T-cell (primary cell): ENCODE measurements at regions of chr5 and their contacts with region 1.

Region 1: DNA sequence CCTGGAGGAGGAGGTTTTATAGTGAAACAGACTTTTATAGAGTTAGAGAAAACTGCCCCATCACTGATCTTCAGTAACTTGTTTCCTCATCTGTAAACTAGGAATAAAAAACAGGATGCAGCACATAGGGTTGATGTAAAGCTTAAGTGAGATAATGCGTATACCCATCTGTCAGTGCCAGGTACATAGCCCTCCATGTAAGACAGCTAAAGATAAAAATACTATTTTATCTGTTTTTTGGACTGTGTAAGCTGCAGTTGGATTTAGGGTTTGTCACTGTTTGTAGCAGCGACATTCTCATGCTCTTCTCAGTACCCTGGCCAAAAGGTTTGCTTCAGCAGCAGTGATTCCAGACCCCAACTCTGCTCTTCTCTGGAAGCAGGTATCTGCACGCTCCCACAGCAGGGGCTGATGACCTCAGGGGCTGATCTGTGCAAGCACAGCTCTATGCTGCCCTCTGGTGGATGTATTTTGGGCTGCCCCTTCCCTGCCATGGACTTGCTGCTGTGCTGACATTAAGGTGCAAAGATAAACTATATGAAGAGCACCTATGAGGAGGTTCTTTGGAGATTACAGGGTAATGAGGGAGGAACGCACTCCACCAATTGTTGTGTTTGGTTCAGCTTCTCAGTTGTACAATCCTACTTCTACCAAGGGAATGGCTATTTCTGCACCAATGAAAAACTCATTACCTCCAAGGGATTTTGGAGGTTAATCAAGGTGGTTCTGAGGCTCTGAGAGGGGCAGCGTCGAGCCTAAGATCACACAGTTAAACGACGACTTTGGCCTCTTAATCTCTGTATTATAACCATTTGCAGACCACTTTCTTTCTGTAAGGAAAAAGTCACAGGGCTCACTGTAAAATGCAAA is 13.1 kb downstream of the HMHB1 start:
- DNase-seq: peak; percentile 55 to 92 (median 76)
- ATAC-seq: peak; percentile 80 to 93 (median 86)
- H3K4me3 ChIP-seq: no peak overlapping the region
- H3K4me3 Mint-ChIP-seq: no peak overlapping the region
- H3K27ac ChIP-seq: no peak overlapping the region
- H3K27ac Mint-ChIP-seq: no peak overlapping the region
- H3K4me1 ChIP-seq: peaks cover 0 to 10% of the 10 kb centered on the region in 2 experiments
- H3K4me1 Mint-ChIP-seq: peaks cover 21 to 22% (median 21%) of the 10 kb centered on the region in 3 donors
- H3K27me3 ChIP-seq: no peaks in the 10 kb centered on the region
- H3K27me3 Mint-ChIP-seq: peaks cover 0 to 1% of the 10 kb centered on the region in 2 donors

Region 2: GRCh38 chr5:142922223-142922952 is 902.7 kb before region 1 on chr5:
- CTCF ChIA-PET with region 1: interaction called in 1 of 2 experiments, 14 read pairs
- POLR2A ChIA-PET with region 1: no interaction called
- DNase-seq: peak in 1 of 35 experiments; percentile 55
- ATAC-seq: peak in 1 of 4 experiments; percentile 41
- H3K4me3 ChIP-seq: no peak overlapping the region
- H3K4me3 Mint-ChIP-seq: no peak overlapping the region
- H3K27ac ChIP-seq: no peak overlapping the region
- H3K27ac Mint-ChIP-seq: no peak overlapping the region
- H3K4me1 ChIP-seq: peaks cover 2 to 11% of the 10 kb centered on the region in 2 experiments
- H3K4me1 Mint-ChIP-seq: peaks cover 17 to 48% (median 33%) of the 10 kb centered on the region in 3 donors
- H3K27me3 ChIP-seq: no peaks in the 10 kb centered on the region
- H3K27me3 Mint-ChIP-seq: no peaks in the 10 kb centered on the region

Region 3: GRCh38 chr5:143002459-143003328 is 822.4 kb before region 1 on chr5:
- CTCF ChIA-PET with region 1: interaction called, 7 to 13 read pairs
- POLR2A ChIA-PET with region 1: no interaction called
- DNase-seq: peak in 34 of 35 experiments; percentile 19 to 89 (median 58)
- ATAC-seq: peak; percentile 88 to 92 (median 90)
- H3K4me3 ChIP-seq: no peak overlapping the region
- H3K4me3 Mint-ChIP-seq: peak overlapping the region; percentile 49 to 63 (median 49)
- H3K27ac ChIP-seq: peak overlapping the region; percentile 97
- H3K27ac Mint-ChIP-seq: peak overlapping the region; percentile 96 to 97
- H3K4me1 ChIP-seq: peaks cover 34 to 63% of the 10 kb centered on the region in 2 experiments
- H3K4me1 Mint-ChIP-seq: peaks cover 44 to 89% (median 81%) of the 10 kb centered on the region in 3 donors
- H3K27me3 ChIP-seq: no peaks in the 10 kb centered on the region
- H3K27me3 Mint-ChIP-seq: no peaks in the 10 kb centered on the region

Region 4: GRCh38 chr5:143302341-143302740 is 522.7 kb before region 1 on chr5:
- CTCF ChIA-PET with region 1: interaction called in 1 of 2 experiments, 10 read pairs
- POLR2A ChIA-PET with region 1: no interaction called
- DNase-seq: no peak
- ATAC-seq: no peak
- H3K4me3 ChIP-seq: no peak overlapping the region
- H3K4me3 Mint-ChIP-seq: no peak overlapping the region
- H3K27ac ChIP-seq: no peak overlapping the region
- H3K27ac Mint-ChIP-seq: peak overlapping the region in 1 of 2 donors; percentile 41
- H3K4me1 ChIP-seq: no peaks in the 10 kb centered on the region
- H3K4me1 Mint-ChIP-seq: peaks cover 28 to 34% (median 28%) of the 10 kb centered on the region in 3 donors
- H3K27me3 ChIP-seq: no peaks in the 10 kb centered on the region
- H3K27me3 Mint-ChIP-seq: no peaks in the 10 kb centered on the region

Region 5: GRCh38 chr5:145797336-145797735 is 1972.2 kb after region 1 on chr5:
- CTCF ChIA-PET with region 1: no interaction called
- POLR2A ChIA-PET with region 1: no interaction called
- DNase-seq: no peak
- ATAC-seq: no peak
- H3K4me3 ChIP-seq: no peak overlapping the region
- H3K4me3 Mint-ChIP-seq: no peak overlapping the region
- H3K27ac ChIP-seq: no peak overlapping the region
- H3K27ac Mint-ChIP-seq: no peak overlapping the region
- H3K4me1 ChIP-seq: no peaks in the 10 kb centered on the region
- H3K4me1 Mint-ChIP-seq: no peaks in the 10 kb centered on the region
- H3K27me3 ChIP-seq: no peaks in the 10 kb centered on the region
- H3K27me3 Mint-ChIP-seq: no peaks in the 10 kb centered on the region